ENCODE measurements at regions of chr11 and their contacts with region 1.

Region 1: DNA sequence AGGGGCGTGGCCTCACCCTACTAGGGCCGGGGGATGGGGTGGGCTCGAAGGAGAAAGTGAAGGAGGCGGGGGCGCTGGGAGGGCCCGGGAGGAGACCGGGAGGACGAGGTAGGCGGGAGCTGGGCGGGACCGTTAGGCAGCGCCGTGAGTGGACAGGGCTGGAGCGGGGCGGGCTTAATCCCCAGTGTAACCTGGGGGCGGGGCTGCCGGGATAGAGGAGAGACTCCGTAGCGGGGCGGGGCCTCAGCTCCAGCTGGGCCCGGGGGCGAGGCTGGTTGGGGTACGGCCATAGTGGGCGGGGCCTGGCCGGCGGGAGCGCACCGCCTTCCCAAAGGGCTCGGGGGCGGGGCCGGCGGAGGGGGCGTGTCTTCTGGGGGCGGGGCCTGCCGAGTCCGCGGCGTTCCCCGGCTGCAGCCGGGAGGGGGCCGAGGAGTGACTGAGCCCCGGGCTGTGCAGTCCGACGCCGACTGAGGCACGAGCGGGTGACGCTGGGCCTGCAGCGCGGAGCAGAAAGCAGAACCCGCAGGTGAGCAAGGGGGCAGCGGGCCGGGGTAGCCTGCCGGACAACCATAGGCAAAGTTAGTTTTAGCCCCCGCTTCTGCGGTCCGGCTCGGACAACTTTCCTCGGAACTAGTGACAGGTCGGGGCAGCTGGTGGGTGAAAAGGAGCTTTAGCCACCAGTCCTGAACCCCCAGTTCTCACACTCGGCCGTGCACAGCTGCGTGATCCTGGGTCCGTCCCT is at the start of gene CD82:
- DNase-seq: peak; percentile 86 to 100 (median 92)
- ATAC-seq: peak; percentile 88
- H3K4me3 ChIP-seq: peak within 1 kb of the TSS; percentile 80
- H3K4me3 Mint-ChIP-seq: peak within 1 kb of the TSS; percentile 82 to 92 (median 88)
- H3K27ac ChIP-seq: peak within 1 kb of the TSS; percentile 72
- H3K27ac Mint-ChIP-seq: peak within 1 kb of the TSS; percentile 48 to 90 (median 85)
- H3K4me1 ChIP-seq: peaks cover 46% of the 10 kb centered on the region in 2 donors
- H3K4me1 Mint-ChIP-seq: peaks cover 31 to 69% (median 56%) of the 10 kb centered on the region in 7 donors
- H3K27me3 ChIP-seq: no peaks in the 10 kb centered on the region
- H3K27me3 Mint-ChIP-seq: no peaks in the 10 kb centered on the region
- total RNA-seq, gene CD82: 37.0 to 319 (median 57.2) TPM

Region 2: DNA sequence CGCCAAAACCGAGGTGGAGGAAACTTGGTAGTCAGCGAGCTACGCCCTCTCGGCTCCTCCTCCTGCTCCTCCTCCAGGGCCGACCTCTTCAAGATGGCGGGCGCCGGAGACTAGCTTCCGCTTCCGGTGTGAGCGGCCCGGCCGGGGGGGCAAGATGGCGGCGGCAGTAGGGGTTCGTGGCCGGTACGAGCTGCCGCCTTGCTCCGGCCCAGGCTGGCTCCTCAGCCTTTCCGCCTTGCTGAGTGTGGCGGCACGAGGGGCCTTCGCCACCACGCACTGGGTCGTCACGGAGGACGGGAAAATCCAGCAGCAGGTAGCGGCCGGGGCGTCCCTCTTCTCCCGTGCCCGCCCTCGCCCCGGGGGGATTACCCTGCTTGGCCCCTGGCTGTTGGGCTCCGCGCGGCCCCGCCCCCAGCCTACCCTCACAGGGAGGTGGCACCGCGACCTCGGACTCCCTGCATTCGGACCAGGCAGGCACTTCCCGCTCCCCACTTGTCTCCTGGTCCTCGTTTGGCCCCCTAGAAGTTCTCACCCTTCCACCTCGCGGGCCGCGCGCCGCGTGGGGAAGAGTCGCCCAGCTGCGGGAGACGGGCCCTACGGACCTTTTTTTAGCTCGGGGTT is 1206.5 kb before region 1 on chr11 and contains the start of gene TTC17:
- CTCF ChIA-PET with region 1: no interaction called
- POLR2A ChIA-PET with region 1: no interaction called
- intact Hi-C with region 1: loop called in 1 of 2 experiments (anchors 2 kb)
- DNase-seq: peak; percentile 83 to 94 (median 90)
- ATAC-seq: peak; percentile 98
- H3K4me3 ChIP-seq: peak within 1 kb of the TSS; percentile 57
- H3K4me3 Mint-ChIP-seq: peak within 1 kb of the TSS; percentile 95 to 100 (median 98)
- H3K27ac ChIP-seq: peak within 1 kb of the TSS; percentile 88
- H3K27ac Mint-ChIP-seq: peak within 1 kb of the TSS; percentile 92 to 99 (median 98)
- H3K4me1 ChIP-seq: peaks cover 24 to 27% of the 10 kb centered on the region in 2 donors
- H3K4me1 Mint-ChIP-seq: peaks cover 24 to 60% (median 54%) of the 10 kb centered on the region in 7 donors
- H3K27me3 ChIP-seq: no peaks in the 10 kb centered on the region
- H3K27me3 Mint-ChIP-seq: no peaks in the 10 kb centered on the region
- total RNA-seq, gene TTC17: 85.2 to 132 (median 102) TPM

Region 3: DNA sequence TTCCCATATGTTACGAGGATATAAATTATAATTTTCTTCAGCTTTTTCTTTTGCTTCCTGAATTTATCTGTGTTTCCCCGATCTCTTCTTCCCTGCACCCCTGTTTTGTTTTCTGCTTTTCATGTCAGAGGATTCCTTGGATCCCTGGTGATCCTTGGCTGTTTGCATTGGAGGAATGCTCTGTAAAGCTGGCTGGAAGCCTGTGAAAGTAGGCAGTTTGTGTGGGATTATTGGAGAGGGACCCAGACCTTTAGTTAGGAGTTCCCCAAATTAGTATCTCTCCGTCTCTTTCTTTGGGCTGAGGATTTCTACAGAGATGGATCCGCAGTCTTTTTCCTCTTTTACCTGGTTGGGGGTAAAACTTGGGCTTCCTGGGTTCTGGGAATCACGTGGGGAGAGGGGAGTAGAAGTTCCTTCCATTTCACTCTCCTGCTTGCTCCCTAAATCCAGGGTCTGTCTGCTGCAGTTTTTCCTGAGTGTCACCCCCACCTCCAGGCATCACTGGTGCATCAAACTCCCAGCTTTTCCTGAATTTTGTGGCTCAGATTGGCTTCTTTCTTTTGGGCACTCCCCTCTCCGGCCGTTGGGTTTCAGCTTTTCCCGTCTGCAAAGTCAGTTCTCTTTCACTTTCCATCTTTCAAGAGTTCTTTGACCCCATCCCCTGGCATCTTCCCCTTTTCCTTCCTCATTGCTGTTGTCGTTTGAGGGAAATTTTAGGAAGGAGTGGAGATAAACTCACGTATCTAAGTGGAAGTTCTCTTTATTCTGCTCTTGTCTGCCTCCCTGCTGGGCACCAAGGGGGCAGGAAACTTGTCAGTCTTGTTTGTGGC is 176.3 kb before region 1 on chr11:
- CTCF ChIA-PET with region 1: no interaction called
- POLR2A ChIA-PET with region 1: no interaction called
- intact Hi-C with region 1: no loop called
- DNase-seq: no peak
- ATAC-seq: no peak
- H3K4me3 ChIP-seq: no peak overlapping the region
- H3K4me3 Mint-ChIP-seq: peak overlapping the region in 1 of 10 donors; percentile 32
- H3K27ac ChIP-seq: no peak overlapping the region
- H3K27ac Mint-ChIP-seq: no peak overlapping the region
- H3K4me1 ChIP-seq: no peaks in the 10 kb centered on the region
- H3K4me1 Mint-ChIP-seq: peaks cover 0 to 3% (median 0%) of the 10 kb centered on the region in 7 donors
- H3K27me3 ChIP-seq: no peaks in the 10 kb centered on the region
- H3K27me3 Mint-ChIP-seq: peaks cover 17 to 42% (median 32%) of the 10 kb centered on the region in 5 donors

Region 4: DNA sequence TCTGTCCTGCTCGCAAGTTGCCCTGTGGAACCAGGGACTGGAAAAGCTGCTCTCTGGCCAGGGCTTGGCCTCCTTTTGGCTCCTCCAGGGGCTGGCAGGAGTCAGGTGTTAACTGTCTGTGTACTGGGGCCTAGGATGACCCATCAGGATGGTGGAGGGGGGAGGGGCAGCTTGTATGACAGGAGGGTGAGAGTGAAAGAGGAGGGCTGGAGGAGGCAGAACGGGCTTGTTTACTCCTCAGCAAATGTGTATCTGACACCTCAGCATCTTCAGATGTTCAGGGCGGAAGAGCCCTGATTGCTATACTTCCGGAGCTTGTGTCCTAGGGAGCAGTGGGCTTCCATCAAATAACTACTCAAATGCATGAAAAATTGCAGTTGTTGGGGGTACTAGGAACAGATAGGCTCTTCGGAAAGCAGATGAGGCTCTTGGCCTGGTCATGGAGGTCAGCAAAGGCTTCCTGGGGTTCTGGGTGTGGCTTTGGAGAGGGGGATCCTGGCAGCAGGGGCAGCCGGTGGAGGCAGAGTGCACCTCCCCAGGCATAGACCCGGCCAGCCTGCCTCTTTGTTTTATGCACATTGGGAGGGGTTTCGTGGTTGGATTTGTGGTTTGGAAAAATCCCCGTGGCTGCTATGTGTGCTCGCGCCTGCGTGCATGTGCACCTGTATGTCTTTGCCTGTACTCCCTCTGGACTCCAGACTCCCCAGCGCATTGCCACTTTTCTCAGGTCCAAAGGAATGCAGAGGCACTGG is 31.3 kb after region 1 on chr11:
- CTCF ChIA-PET with region 1: interaction called, 4 read pairs
- POLR2A ChIA-PET with region 1: interaction called, 13 read pairs
- intact Hi-C with region 1: loop called (anchors 1 kb)
- DNase-seq: peak; percentile 28 to 81 (median 70)
- ATAC-seq: peak; percentile 86
- H3K4me3 ChIP-seq: peak overlapping the region; percentile 54
- H3K4me3 Mint-ChIP-seq: peak overlapping the region; percentile 69 to 91 (median 80)
- H3K27ac ChIP-seq: peak overlapping the region; percentile 70
- H3K27ac Mint-ChIP-seq: peak overlapping the region; percentile 87 to 98 (median 95)
- H3K4me1 ChIP-seq: peaks cover 37 to 38% of the 10 kb centered on the region in 2 donors
- H3K4me1 Mint-ChIP-seq: peaks cover 15 to 80% (median 71%) of the 10 kb centered on the region in 7 donors
- H3K27me3 ChIP-seq: no peaks in the 10 kb centered on the region
- H3K27me3 Mint-ChIP-seq: no peaks in the 10 kb centered on the region

Region 5: DNA sequence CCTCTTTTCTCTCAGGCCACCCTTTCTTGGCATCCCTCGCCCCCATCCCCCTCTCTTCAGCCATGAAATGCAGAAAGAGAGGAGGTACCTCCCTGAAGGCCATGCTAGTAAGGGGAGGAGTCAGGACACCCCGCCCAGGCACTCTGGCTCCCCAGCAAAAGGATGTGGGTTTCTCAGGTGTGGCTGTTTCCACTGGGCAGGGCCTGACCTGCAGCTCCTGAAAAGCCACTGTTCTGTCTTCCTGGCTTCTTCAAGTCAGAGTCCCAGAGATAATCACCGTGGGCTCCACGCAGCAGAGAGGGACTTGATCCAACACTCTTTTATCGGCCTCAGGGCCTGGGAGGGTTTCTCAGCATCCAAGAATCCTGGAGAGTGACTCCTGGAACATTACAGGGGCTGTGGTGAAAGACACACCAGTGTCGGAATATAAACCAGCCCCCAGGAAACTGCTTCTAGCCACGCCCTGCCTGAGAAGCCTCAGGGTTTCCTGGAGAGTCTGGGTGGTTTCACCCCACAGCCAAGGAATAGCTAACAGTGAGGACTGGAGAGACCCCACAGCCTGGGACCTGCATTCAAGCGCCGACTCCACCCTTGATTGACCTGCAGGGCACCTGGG is 115.7 kb after region 1 on chr11:
- CTCF ChIA-PET with region 1: no interaction called
- POLR2A ChIA-PET with region 1: no interaction called
- intact Hi-C with region 1: loop called in 1 of 2 experiments (anchors 5 kb)
- DNase-seq: peak in 7 of 9 donors; percentile 33 to 73 (median 65)
- ATAC-seq: peak; percentile 73
- H3K4me3 ChIP-seq: peak overlapping the region; percentile 59
- H3K4me3 Mint-ChIP-seq: peak overlapping the region; percentile 51 to 93 (median 86)
- H3K27ac ChIP-seq: peak overlapping the region; percentile 59
- H3K27ac Mint-ChIP-seq: peak overlapping the region; percentile 38 to 94 (median 82)
- H3K4me1 ChIP-seq: peaks cover 26 to 45% of the 10 kb centered on the region in 2 donors
- H3K4me1 Mint-ChIP-seq: peaks cover 39 to 73% (median 58%) of the 10 kb centered on the region in 7 donors
- H3K27me3 ChIP-seq: no peaks in the 10 kb centered on the region
- H3K27me3 Mint-ChIP-seq: no peaks in the 10 kb centered on the region

Region 6: GRCh38 chr11:45079943-45080719 is 514.7 kb after region 1 on chr11:
- CTCF ChIA-PET with region 1: no interaction called
- POLR2A ChIA-PET with region 1: no interaction called
- intact Hi-C with region 1: loop called in 1 of 2 experiments (anchors 1 kb)
- DNase-seq: peak; percentile 22 to 70 (median 65)
- ATAC-seq: peak; percentile 86
- H3K4me3 ChIP-seq: peak overlapping the region; percentile 42
- H3K4me3 Mint-ChIP-seq: peak overlapping the region; percentile 39 to 82 (median 72)
- H3K27ac ChIP-seq: peak overlapping the region; percentile 60
- H3K27ac Mint-ChIP-seq: peak overlapping the region; percentile 88 to 96 (median 93)
- H3K4me1 ChIP-seq: peaks cover 32 to 62% of the 10 kb centered on the region in 2 donors
- H3K4me1 Mint-ChIP-seq: peaks cover 29 to 63% (median 55%) of the 10 kb centered on the region in 7 donors
- H3K27me3 ChIP-seq: no peaks in the 10 kb centered on the region
- H3K27me3 Mint-ChIP-seq: peaks cover 0 to 4% (median 0%) of the 10 kb centered on the region in 5 donors

Region 7: DNA sequence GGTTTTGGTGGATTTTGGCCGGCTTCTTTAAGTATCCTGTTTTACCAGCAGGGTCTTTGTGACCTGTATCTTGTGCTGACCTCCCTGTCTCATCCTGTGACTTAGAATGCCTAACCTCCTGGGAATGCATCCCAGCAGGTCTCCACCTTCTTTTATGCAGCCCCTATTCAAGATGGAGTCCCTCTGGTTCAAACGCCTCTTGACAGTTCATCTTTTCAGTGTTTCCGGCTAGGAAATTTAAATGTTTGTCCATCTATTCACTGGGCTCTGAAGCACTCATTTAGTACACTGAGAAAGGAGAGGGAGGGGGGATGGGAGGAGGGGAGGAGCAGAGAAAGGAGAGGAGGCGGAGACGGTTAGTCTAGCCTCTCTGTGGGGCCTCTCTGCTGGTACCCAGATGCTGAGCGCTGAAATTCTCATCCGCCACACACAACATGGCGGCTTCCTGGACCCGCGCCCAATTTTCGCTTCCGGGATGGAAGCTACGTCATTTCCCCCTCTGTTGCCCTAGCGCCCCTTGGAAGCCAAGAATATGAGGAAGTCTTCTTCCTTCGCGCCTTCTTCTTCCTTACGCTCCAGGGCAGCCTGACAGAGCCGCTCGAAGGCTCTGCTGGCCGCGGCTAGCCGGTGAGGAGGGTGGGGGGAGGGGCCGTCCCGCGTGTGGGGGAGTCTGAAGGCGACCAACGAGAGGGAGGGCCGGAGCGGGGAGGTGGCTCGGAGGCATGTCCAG is 789.8 kb after region 1 on chr11:
- CTCF ChIA-PET with region 1: no interaction called
- POLR2A ChIA-PET with region 1: no interaction called
- intact Hi-C with region 1: loop called in 1 of 2 experiments (anchors 2 kb)
- DNase-seq: peak; percentile 77 to 91 (median 88)
- ATAC-seq: peak; percentile 96
- H3K4me3 ChIP-seq: peak overlapping the region; percentile 93
- H3K4me3 Mint-ChIP-seq: peak overlapping the region; percentile 75 to 87 (median 82)
- H3K27ac ChIP-seq: peak overlapping the region; percentile 73
- H3K27ac Mint-ChIP-seq: peak overlapping the region; percentile 70 to 91 (median 83)
- H3K4me1 ChIP-seq: peaks cover 0 to 5% of the 10 kb centered on the region in 2 donors
- H3K4me1 Mint-ChIP-seq: peaks cover 9 to 31% (median 26%) of the 10 kb centered on the region in 7 donors
- H3K27me3 ChIP-seq: no peaks in the 10 kb centered on the region
- H3K27me3 Mint-ChIP-seq: peaks cover 0 to 28% (median 7%) of the 10 kb centered on the region in 5 donors

Region 8: DNA sequence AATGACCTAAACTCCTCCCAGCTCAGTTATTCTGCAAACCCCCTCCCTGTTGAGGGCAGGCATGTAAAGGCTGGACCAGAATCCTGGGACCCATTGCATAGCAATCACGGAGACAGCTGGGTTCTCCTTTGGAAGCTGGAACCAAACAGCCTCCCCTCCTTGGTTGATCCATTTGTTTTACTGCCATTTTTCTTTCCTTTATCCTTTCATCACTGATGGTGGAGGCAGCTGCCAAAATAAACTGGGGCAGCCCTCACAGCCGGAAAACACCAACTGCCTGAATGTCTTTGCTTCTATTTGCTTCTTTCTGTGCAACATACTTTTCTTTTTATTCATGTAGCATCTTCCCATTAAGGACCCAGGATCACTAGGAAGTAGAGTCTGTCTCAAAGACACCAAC is 870.7 kb after region 1 on chr11:
- CTCF ChIA-PET with region 1: no interaction called
- POLR2A ChIA-PET with region 1: no interaction called
- intact Hi-C with region 1: no loop called
- DNase-seq: no peak
- ATAC-seq: no peak
- H3K4me3 ChIP-seq: no peak overlapping the region
- H3K4me3 Mint-ChIP-seq: no peak overlapping the region
- H3K27ac ChIP-seq: no peak overlapping the region
- H3K27ac Mint-ChIP-seq: no peak overlapping the region
- H3K4me1 ChIP-seq: no peaks in the 10 kb centered on the region
- H3K4me1 Mint-ChIP-seq: no peaks in the 10 kb centered on the region
- H3K27me3 ChIP-seq: no peaks in the 10 kb centered on the region
- H3K27me3 Mint-ChIP-seq: peaks cover 5 to 32% (median 24%) of the 10 kb centered on the region in 5 donors

Measured in naive thymus-derived CD4-positive, alpha-beta T cell (primary cell).